Activated CD4-positive, alpha-beta T cell treated with anti-CD3 and anti-CD28 coated beads for 36 hours (primary cell): ENCODE measurements at regions of chr1 and their contacts with region 1.

Region 1: GRCh38 chr1:78607334-78607927 is 12.8 kb upstream of the IFI44L start:
- DNase-seq: no peak
- ATAC-seq: no peak
- H3K4me3 Mint-ChIP-seq: no peak overlapping the region
- H3K27ac Mint-ChIP-seq: no peak overlapping the region
- H3K4me1 Mint-ChIP-seq: peaks cover 5% of the 10 kb centered on the region
- H3K27me3 Mint-ChIP-seq: no peaks in the 10 kb centered on the region

Region 2: GRCh38 chr1:78126506-78126905 is 480.9 kb before region 1 on chr1:
- CTCF ChIA-PET with region 1: interaction called, 38 read pairs
- POLR2A ChIA-PET with region 1: no interaction called
- intact Hi-C with region 1: loop called (anchors 1 kb)
- DNase-seq: no peak
- ATAC-seq: no peak
- H3K4me3 Mint-ChIP-seq: no peak overlapping the region
- H3K27ac Mint-ChIP-seq: no peak overlapping the region
- H3K4me1 Mint-ChIP-seq: no peaks in the 10 kb centered on the region
- H3K27me3 Mint-ChIP-seq: no peaks in the 10 kb centered on the region

Region 3: DNA sequence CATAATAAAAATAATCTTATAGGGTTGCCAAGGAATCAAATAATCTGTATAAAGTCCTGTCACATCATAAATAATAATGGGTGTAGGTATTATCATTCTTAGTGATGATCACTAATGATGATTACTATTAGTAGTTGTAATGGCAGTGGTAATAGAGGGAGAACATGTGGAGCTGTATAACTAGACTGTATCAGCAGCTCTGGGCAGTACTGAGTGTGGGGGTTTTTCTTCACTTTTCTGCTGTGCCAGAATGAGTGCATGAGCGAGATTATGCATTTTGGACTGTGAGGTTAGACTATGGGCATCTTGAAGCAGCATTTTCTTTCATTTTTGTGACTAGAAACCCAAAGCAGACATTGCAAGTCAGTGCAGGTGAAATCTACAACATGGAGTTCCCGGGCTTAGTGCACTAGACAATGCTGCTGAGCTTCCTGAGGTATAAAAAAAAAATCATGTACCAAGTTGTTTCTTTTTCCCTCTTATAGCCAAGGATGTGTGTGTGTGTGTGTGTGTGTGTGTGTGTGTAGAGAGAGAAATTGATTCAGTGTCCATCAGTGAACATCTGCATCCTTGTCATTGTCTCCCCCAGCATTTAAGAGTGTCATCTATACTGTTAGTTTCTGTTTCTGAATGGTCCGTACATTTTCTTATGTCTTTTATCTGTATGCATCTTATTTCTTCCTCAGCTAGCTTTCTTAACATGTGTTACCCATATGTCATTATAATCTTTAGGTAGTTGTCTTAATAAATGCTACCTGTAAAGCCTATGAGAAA is 475.1 kb before region 1 on chr1:
- CTCF ChIA-PET with region 1: interaction called, 38 read pairs
- POLR2A ChIA-PET with region 1: no interaction called
- intact Hi-C with region 1: loop called (anchors 1 kb)
- DNase-seq: no peak
- ATAC-seq: no peak
- H3K4me3 Mint-ChIP-seq: no peak overlapping the region
- H3K27ac Mint-ChIP-seq: no peak overlapping the region
- H3K4me1 Mint-ChIP-seq: no peaks in the 10 kb centered on the region
- H3K27me3 Mint-ChIP-seq: no peaks in the 10 kb centered on the region

Region 4: DNA sequence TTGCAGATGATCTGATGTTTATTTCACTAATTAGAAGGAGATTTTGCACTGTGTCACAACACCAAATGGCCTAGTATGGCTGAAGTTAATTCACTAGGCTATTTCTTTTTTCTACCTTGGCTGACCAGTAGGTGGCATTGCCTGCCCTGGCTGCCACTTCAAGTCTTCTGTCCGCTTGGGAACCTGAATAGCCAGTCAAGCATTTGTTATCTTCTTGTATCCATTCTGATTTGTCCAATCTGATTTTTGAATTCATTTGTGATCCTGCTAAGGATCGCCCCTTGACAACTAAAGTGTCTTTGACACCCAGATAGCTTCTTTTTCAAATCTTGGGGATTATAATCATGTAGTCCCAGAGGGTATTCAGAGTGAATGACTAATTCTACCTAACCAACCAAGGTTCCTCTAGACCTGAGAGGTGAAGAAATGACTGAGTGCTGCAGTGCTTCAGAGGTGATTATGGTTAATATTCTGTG is 462.3 kb before region 1 on chr1:
- CTCF ChIA-PET with region 1: interaction called, 30 read pairs
- POLR2A ChIA-PET with region 1: no interaction called
- intact Hi-C with region 1: loop called (anchors 1 to 2 kb)
- DNase-seq: peak; percentile 60
- ATAC-seq: peak; percentile 70
- H3K4me3 Mint-ChIP-seq: no peak overlapping the region
- H3K27ac Mint-ChIP-seq: no peak overlapping the region
- H3K4me1 Mint-ChIP-seq: peaks cover 17% of the 10 kb centered on the region
- H3K27me3 Mint-ChIP-seq: peaks cover 2% of the 10 kb centered on the region

Region 5: DNA sequence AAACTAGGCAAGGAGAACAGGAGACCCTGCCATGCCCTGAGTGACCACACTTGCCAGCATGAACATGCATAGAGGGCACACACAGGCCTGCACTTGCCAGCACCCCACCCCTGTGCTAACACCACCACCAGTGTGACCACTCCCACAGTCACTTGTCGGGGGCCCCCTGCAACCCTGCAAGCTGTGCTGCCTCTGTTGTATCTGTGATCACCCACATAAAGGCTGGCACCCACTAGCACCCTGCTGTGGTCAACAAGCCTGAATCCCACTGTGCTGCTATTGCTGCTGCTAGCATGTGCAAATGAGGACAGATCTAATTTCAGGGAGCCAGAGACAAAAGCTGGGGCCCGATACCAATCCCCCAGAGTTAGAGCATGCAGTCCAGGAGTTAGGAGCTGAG is 344.0 kb before region 1 on chr1:
- CTCF ChIA-PET with region 1: no interaction called
- POLR2A ChIA-PET with region 1: no interaction called
- intact Hi-C with region 1: no loop called
- DNase-seq: no peak
- ATAC-seq: no peak
- H3K4me3 Mint-ChIP-seq: no peak overlapping the region
- H3K27ac Mint-ChIP-seq: no peak overlapping the region
- H3K4me1 Mint-ChIP-seq: no peaks in the 10 kb centered on the region
- H3K27me3 Mint-ChIP-seq: no peaks in the 10 kb centered on the region

Region 6: DNA sequence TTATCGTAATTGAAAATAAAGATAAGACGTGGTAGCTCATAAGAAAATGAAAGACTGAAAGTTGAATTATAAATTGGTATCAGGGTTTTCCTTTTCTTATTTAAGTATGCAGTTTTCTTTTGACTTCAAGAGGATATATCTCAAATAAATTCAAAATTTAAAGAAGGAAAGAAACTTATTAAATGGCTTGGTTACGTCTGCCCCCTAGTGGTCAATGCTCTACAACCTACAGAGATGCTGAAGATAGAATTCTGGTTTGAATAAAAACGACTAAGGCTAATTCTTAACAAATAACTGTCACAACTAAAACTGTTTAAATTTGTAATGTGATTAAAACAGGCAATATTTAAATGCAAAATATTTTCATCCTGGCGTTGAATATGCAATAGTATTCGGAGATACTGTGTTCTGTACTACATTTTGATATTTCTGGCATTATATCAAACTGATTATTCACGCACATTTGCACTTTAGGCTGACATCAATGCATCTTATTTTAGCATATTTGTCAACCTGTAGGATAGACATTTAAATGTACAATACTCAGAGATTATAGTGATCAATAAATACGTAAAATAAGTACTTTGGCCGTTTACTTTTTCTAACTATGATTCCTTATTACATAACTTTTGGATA is 69.0 kb after region 1 on chr1:
- CTCF ChIA-PET with region 1: interaction called, 21 read pairs
- POLR2A ChIA-PET with region 1: no interaction called
- intact Hi-C with region 1: no loop called
- DNase-seq: peak; percentile 72
- ATAC-seq: no peak
- H3K4me3 Mint-ChIP-seq: no peak overlapping the region
- H3K27ac Mint-ChIP-seq: no peak overlapping the region
- H3K4me1 Mint-ChIP-seq: peaks cover 7% of the 10 kb centered on the region
- H3K27me3 Mint-ChIP-seq: peaks cover 2% of the 10 kb centered on the region

Region 7: GRCh38 chr1:79617777-79618176 is 1010.3 kb after region 1 on chr1:
- CTCF ChIA-PET with region 1: no interaction called
- POLR2A ChIA-PET with region 1: no interaction called
- intact Hi-C with region 1: no loop called
- DNase-seq: no peak
- ATAC-seq: no peak
- H3K4me3 Mint-ChIP-seq: no peak overlapping the region
- H3K27ac Mint-ChIP-seq: no peak overlapping the region
- H3K4me1 Mint-ChIP-seq: no peaks in the 10 kb centered on the region
- H3K27me3 Mint-ChIP-seq: no peaks in the 10 kb centered on the region